ENCODE measurements at regions of chr11 and their contacts with region 1.

Region 1: DNA sequence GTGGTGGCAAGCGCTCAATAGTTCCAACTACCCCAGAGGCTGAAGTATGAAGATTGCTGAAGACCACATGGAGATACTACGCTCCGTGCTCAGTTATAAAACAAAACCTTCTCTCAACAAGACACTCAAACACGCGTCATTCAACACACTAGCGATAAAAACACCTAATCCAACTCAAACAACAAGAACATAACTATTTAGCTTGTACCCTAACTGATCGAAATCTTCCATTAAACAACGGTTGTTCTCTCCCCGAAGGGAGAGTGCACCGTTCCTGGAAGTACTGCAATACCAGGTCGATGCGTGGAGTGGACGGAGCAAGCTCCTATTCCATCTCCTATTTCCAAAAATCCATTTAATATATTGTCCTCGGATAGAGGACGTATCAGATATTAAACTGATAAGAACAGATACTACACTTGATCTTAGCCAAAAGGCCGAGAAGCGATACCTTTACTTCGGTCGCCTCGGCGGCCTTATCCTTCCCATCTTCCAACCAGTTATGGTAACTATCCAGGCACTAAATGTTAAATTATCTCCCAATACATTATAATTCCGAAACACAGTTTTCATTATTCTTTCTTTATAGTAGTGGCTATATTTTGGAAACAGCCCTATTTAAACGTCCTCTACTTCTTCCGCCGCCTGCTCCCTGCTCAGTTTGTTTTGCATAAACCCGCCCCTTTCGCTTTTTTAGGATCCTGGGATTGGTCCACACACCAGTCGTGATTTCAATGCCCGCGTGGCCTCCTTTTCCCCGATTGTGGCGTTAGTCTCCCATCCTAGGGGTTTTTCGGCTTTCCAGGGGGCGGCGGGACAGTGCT is 2.2 kb upstream of the WDR74 start:
- DNase-seq: peak; percentile 70 to 95
- ATAC-seq: peak; percentile 68 to 83 (median 79)
- H3K4me3 ChIP-seq: peak overlapping the region; percentile 19 to 99 (median 77)
- H3K27ac ChIP-seq: peak overlapping the region; percentile 92 to 98 (median 97)
- H3K4me1 ChIP-seq: peaks cover 0 to 36% (median 24%) of the 10 kb centered on the region in 9 donors
- H3K27me3 ChIP-seq: no peaks in the 10 kb centered on the region
- CTCF ChIP-seq: no peak

Region 2: DNA sequence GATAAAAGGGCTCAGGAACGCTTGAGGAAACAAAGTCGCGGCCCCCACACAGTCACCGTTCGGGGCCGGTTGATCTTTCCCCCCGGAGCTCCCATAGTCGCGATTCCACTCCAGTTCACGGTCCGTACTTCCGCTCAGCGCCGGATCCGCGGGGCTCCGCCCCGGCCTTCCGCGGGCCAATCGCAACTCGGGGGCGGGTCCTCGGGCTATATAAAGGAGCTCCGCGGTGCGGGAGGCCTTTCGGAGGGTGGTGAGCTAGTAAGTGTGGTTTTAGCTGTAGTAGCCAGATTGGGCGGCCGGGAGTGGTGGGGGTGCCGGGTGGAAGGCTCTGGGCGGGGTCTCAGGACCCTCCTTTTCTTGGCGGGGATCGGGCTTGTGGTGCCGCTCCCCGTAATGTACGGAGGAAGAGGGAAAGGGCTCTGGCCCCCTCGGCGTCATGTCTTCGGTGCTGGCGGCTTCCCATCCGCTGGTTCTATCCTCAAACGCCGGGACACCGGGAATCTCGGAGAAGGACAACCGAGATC is 176.4 kb before region 1 on chr11 and contains the starts of genes C11orf98 and CSKMT:
- intact Hi-C with region 1: no loop called
- DNase-seq: peak; percentile 94 to 95
- ATAC-seq: peak; percentile 96 to 99 (median 98)
- H3K4me3 ChIP-seq: peak within 1 kb of the TSS; percentile 59 to 95 (median 80)
- H3K27ac ChIP-seq: peak within 1 kb of the TSS; percentile 80 to 94 (median 91)
- H3K4me1 ChIP-seq: peaks cover 16 to 49% (median 37%) of the 10 kb centered on the region in 9 donors
- H3K27me3 ChIP-seq: no peaks in the 10 kb centered on the region
- CTCF ChIP-seq: no peak
- total RNA-seq, gene C11orf98: 25.8 to 41.5 (median 30.0) TPM
- total RNA-seq, gene CSKMT: 2.4 to 7.7 (median 4.2) TPM

Region 3: GRCh38 chr11:62726915-62727763 is 114.4 kb before region 1 on chr11 and contains the start of gene HNRNPUL2:
- intact Hi-C with region 1: loop called in 1 of 10 experiments (anchors 5 kb)
- DNase-seq: peak; percentile 98 to 99
- ATAC-seq: peak; percentile 93 to 97 (median 94)
- H3K4me3 ChIP-seq: peak within 1 kb of the TSS; percentile 63 to 98 (median 89)
- H3K27ac ChIP-seq: peak within 1 kb of the TSS; percentile 87 to 99 (median 93)
- H3K4me1 ChIP-seq: peaks cover 12 to 69% (median 49%) of the 10 kb centered on the region in 9 donors
- H3K27me3 ChIP-seq: no peaks in the 10 kb centered on the region
- CTCF ChIP-seq: peak in 3 of 9 donors; percentile 16 to 32 (median 19)
- total RNA-seq, gene HNRNPUL2: 26.9 to 40.9 (median 33.4) TPM

Region 4: GRCh38 chr11:62737196-62737595 is 104.4 kb before region 1 on chr11:
- intact Hi-C with region 1: no loop called
- DNase-seq: no peak
- ATAC-seq: no peak
- H3K4me3 ChIP-seq: no peak overlapping the region
- H3K27ac ChIP-seq: no peak overlapping the region
- H3K4me1 ChIP-seq: peaks cover 0 to 13% (median 6%) of the 10 kb centered on the region in 9 donors
- H3K27me3 ChIP-seq: no peaks in the 10 kb centered on the region
- CTCF ChIP-seq: no peak

Region 5: DNA sequence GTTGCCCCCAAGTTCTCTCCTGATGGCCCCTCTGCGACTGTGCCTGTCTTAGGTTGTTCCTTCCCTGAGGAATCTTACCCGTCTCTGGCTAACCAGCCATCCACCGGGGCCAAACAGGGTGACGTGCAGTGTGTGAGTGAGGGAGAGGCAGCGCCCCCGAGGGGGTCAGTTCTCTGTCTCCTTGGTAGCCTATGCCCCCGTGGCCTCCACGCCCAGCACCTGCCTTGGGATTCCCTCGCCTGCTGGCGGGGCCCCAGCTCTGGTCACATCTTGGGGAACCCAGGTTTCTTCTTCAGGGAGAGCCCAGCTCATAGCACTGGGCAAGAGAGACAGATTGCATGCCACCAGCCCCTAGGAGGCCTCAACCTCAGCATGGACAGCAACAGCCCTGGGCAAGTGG is 42.1 kb before region 1 on chr11:
- intact Hi-C with region 1: loop called in 3 of 10 experiments (anchors 2 to 5 kb)
- DNase-seq: no peak
- ATAC-seq: no peak
- H3K4me3 ChIP-seq: no peak overlapping the region
- H3K27ac ChIP-seq: no peak overlapping the region
- H3K4me1 ChIP-seq: peaks cover 9 to 19% (median 15%) of the 10 kb centered on the region in 9 donors
- H3K27me3 ChIP-seq: no peaks in the 10 kb centered on the region
- CTCF ChIP-seq: no peak

Region 6: GRCh38 chr11:62855571-62856332 is 14.2 kb after region 1 on chr11:
- intact Hi-C with region 1: loop called in 2 of 10 experiments (anchors 1 to 2 kb)
- DNase-seq: peak; percentile 96
- ATAC-seq: peak; percentile 97 to 99 (median 99)
- H3K4me3 ChIP-seq: peak overlapping the region; percentile 51 to 98 (median 68)
- H3K27ac ChIP-seq: peak overlapping the region; percentile 1 to 88 (median 77)
- H3K4me1 ChIP-seq: peaks cover 12 to 49% (median 29%) of the 10 kb centered on the region in 9 donors
- H3K27me3 ChIP-seq: no peaks in the 10 kb centered on the region
- CTCF ChIP-seq: no peak

Measured in heart right ventricle (tissue), 16 donors.